Activated T-helper 1 cell treated with anti-CD3 and anti-CD28 coated beads, Interleukin-12 subunit alpha, Interleukin-12 subunit beta, Interleukin-2, Interleukin-4 antibody, amounts not matched to agents 30 ng/mL and 10 ng/mL and 1 ng/mL, durations not matched to agents 14 hours and 24 hours and 36 hours (primary cell): ENCODE measurements at regions of chr1 and their contacts with region 1.

Region 1: GRCh38 chr1:24744911-24745710 is at the start of gene CLIC4:
- DNase-seq: peak; percentile 100
- H3K4me3 Mint-ChIP-seq: peak within 1 kb of the TSS; percentile 93
- H3K27ac Mint-ChIP-seq: peak within 1 kb of the TSS; percentile 91
- H3K4me1 Mint-ChIP-seq: peaks cover 56% of the 10 kb centered on the region
- H3K27me3 Mint-ChIP-seq: peaks cover 2% of the 10 kb centered on the region
- total RNA-seq, gene CLIC4: 16.8 and 20.6 TPM in 2 replicates

Region 2: GRCh38 chr1:24186993-24187805 is 557.9 kb before region 1 on chr1 and contains the start of gene IFNLR1:
- intact Hi-C with region 1: loop called (anchors 10 kb)
- DNase-seq: peak; percentile 61
- H3K4me3 Mint-ChIP-seq: peak within 1 kb of the TSS; percentile 76
- H3K27ac Mint-ChIP-seq: peak within 1 kb of the TSS; percentile 23
- H3K4me1 Mint-ChIP-seq: peaks cover 40% of the 10 kb centered on the region
- H3K27me3 Mint-ChIP-seq: peaks cover 7% of the 10 kb centered on the region
- total RNA-seq, gene IFNLR1: 2.2 and 3.1 TPM in 2 replicates

Region 3: DNA sequence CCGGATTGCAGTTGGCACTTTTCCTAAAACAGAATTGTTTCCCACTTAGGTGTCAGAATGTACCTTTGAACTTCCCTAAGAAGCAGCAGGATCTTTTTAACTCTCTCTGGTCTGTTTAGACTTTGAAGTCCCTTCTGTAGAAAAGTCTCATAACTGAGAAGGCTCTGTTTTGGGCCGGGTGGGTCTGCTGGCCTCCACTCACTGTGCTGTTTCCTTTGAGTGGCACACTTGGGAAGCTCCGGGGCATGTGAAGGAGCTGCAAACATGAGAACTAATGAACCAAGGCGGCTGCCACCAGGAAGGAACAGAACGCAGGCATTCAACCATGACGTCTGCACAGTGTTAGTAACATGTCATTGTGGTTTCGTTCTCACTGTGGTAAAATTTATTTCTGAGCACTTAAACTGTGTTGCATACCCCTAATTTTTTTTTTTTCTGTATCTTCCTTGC is 208.7 kb before region 1 on chr1:
- intact Hi-C with region 1: loop called (anchors 5 kb)
- DNase-seq: peak; percentile 38
- H3K4me3 Mint-ChIP-seq: peak overlapping the region; percentile 75
- H3K27ac Mint-ChIP-seq: peak overlapping the region; percentile 95
- H3K4me1 Mint-ChIP-seq: peaks cover 67% of the 10 kb centered on the region
- H3K27me3 Mint-ChIP-seq: no peaks in the 10 kb centered on the region

Region 4: DNA sequence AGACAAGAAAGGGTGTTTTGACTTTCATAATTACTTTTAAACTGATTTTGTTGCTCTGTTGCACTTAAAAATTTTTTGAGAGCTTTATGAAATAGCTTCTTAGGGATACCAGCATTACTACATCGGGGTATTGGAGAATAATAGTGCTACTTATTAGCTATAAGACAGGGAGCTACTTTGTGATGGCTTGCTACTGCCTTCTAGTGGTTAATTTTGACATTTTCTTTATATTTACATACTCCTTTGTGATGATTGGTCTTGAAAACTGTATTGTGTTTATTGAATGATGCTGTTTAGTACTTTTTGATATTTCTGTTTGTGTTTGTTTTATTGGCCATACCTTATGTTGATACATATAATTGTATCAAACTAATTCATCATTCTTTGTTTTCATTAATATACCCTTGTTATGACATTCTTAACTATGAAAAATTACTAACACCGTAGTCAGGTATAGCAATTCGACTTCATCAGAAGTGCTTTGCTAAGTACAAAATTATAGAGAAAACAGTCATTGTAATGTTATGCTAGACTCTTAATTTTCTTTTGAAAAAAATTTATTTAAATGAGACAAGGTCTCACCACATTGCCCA is 85.7 kb after region 1 on chr1:
- intact Hi-C with region 1: loop called (anchors 2 kb)
- DNase-seq: no peak
- H3K4me3 Mint-ChIP-seq: no peak overlapping the region
- H3K27ac Mint-ChIP-seq: no peak overlapping the region
- H3K4me1 Mint-ChIP-seq: no peaks in the 10 kb centered on the region
- H3K27me3 Mint-ChIP-seq: peaks cover 3% of the 10 kb centered on the region

Region 5: DNA sequence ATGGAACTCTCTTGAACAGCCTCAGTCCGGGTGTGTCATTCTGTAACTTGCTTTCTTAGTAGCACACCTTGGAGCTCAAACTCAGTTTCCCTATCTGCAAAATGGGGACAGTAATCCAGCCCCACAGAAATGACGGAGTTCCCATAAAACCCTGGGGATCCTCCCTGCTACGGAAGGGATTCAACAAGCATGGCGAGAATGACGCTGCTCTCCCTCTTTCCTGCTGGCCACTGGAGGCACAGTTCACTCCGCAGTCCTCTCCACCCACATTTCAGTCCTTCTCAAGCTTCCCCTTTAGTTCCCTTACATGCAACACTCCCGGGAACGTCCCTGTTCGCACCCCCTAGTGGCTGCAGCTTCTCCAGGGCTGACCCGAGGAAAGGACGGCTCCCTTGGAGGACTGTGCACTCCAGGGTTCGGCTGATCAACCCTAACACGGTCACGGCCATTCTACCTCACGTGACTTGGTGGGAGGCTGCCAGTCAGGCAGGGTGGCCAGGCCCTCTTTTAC is 164.3 kb after region 1 on chr1:
- intact Hi-C with region 1: no loop called
- DNase-seq: no peak
- H3K4me3 Mint-ChIP-seq: no peak overlapping the region
- H3K27ac Mint-ChIP-seq: peak overlapping the region; percentile 55
- H3K4me1 Mint-ChIP-seq: peaks cover 23% of the 10 kb centered on the region
- H3K27me3 Mint-ChIP-seq: no peaks in the 10 kb centered on the region

Region 6: GRCh38 chr1:25022361-25023189 is 277.5 kb after region 1 on chr1:
- intact Hi-C with region 1: loop called (anchors 2 kb)
- DNase-seq: peak; percentile 88
- H3K4me3 Mint-ChIP-seq: peak overlapping the region; percentile 74
- H3K27ac Mint-ChIP-seq: peak overlapping the region; percentile 97
- H3K4me1 Mint-ChIP-seq: peaks cover 93% of the 10 kb centered on the region
- H3K27me3 Mint-ChIP-seq: no peaks in the 10 kb centered on the region